ENCODE measurements at regions of chr19 and their contacts with region 1.

Region 1: GRCh38 chr19:2475702-2476450 is at the start of gene GADD45B:
- DNase-seq: peak; percentile 99
- H3K4me3 ChIP-seq: peak within 1 kb of the TSS; percentile 97
- H3K27ac ChIP-seq: peak within 1 kb of the TSS; percentile 91
- H3K4me1 ChIP-seq: peaks cover 40% of the 10 kb centered on the region
- CTCF ChIP-seq: no peak
- total RNA-seq, gene GADD45B: 98.4 and 102 TPM in 2 replicates

Region 2: GRCh38 chr19:2427429-2428320 is 48.2 kb before region 1 on chr19 and contains the start of gene TIMM13:
- CTCF ChIA-PET with region 1: no interaction called
- POLR2A ChIA-PET with region 1: no interaction called
- intact Hi-C with region 1: loop called (anchors 1 kb)
- DNase-seq: peak; percentile 99
- H3K4me3 ChIP-seq: peak within 1 kb of the TSS; percentile 99
- H3K27ac ChIP-seq: peak within 1 kb of the TSS; percentile 75
- H3K4me1 ChIP-seq: peaks cover 21% of the 10 kb centered on the region
- CTCF ChIP-seq: no peak
- total RNA-seq, gene TIMM13: 55.4 and 60.0 TPM in 2 replicates

Region 3: DNA sequence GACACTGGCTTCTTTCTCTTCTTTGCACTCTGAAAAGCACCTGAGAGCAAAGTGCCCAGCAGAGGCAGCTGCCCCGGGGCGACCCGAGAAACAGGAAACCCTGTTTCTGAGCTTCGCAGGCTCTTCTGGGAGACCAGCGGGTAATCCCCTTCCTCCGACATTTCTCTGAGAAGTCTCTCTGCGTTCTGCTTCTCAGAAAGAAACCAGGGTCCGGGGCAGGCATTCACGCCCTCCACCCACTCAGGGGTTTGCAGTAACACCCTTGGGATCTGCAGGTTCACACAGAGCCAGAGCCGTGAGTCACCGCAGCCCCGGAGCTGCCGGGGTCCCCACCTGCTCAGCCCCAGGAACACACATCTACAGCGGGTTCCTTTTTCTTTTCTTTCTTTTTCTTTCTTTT is 86.0 kb after region 1 on chr19:
- CTCF ChIA-PET with region 1: interaction called, 3 read pairs
- POLR2A ChIA-PET with region 1: no interaction called
- intact Hi-C with region 1: loop called (anchors 5 kb)
- DNase-seq: peak; percentile 82
- H3K4me3 ChIP-seq: peak overlapping the region; percentile 61
- H3K27ac ChIP-seq: peak overlapping the region; percentile 47
- H3K4me1 ChIP-seq: peaks cover 25% of the 10 kb centered on the region
- CTCF ChIP-seq: no peak

Region 4: GRCh38 chr19:2610637-2611482 is 135.0 kb after region 1 on chr19:
- CTCF ChIA-PET with region 1: interaction called, 38 read pairs
- POLR2A ChIA-PET with region 1: interaction called, 72 read pairs
- intact Hi-C with region 1: loop called (anchors 1 kb)
- DNase-seq: peak; percentile 93
- H3K4me3 ChIP-seq: peak overlapping the region; percentile 60
- H3K27ac ChIP-seq: peak overlapping the region; percentile 85
- H3K4me1 ChIP-seq: peaks cover 73% of the 10 kb centered on the region
- CTCF ChIP-seq: peak; percentile 98

Region 5: DNA sequence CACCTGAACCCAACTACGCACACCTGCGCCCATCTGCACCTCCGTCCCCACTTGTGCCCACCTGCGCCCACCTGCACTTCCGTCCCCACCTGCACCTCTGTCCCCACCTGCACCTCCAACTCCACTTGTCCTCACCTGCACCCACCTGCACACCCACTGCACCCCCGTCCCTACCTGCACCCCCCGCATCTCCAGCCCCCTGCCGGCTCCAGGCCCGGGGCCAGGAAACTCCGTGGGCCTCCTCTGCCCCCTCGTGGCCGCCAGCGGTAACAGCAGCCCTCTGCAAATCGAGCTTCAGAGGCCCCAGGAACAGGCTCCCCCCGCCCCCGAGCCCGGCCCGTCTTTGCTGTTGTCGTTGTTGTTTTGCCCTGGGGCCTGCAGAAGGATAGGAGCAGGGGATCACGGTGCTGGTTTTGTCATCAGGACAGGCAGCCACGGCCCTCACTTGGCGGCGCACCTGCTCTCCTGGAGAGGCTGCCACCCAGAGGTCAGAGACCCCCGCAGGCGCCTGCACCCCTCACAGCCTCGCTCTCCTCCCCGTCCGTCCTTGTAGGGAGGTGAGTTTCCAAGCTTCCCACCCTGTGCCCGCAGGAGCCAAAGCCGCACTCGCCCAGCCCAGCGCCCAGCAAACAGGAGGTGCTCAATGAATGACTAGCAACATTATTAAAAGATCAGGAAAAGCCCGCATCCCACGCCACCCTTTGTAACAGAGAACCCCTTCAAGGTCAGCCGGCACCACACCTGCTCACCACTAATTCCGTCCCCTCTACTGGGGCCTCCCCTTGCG is 161.2 kb after region 1 on chr19:
- CTCF ChIA-PET with region 1: no interaction called
- POLR2A ChIA-PET with region 1: interaction called, 3 read pairs
- intact Hi-C with region 1: loop called (anchors 1 kb)
- DNase-seq: peak; percentile 68
- H3K4me3 ChIP-seq: no peak overlapping the region
- H3K27ac ChIP-seq: peak overlapping the region; percentile 3
- H3K4me1 ChIP-seq: peaks cover 41% of the 10 kb centered on the region
- CTCF ChIP-seq: peak; percentile 88